ENCODE measurements at regions of chr12 and their contacts with region 1.

Region 1: DNA sequence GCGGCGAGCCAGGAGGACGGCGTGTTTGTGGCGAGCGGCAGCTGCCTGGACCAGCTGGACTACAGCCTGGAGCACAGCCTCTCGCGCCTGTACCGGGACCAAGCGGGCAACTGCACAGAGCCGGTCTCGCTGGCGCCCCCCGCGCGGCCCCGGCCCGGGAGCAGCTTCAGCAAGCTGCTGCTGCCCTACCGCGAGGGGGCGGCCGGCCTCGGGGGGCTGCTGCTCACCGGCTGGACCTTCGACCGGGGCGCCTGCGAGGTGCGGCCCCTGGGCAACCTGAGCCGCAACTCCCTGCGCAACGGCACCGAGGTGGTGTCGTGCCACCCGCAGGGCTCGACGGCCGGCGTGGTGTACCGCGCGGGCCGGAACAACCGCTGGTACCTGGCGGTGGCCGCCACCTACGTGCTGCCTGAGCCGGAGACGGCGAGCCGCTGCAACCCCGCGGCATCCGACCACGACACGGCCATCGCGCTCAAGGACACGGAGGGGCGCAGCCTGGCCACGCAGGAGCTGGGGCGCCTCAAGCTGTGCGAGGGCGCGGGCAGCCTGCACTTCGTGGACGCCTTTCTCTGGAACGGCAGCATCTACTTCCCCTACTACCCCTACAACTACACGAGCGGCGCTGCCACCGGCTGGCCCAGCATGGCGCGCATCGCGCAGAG is 873 bp downstream of the PLXNC1 start:
- DNase-seq: peak; percentile 50
- H3K4me3 ChIP-seq: peak overlapping the region; percentile 56
- H3K27ac ChIP-seq: peak overlapping the region; percentile 3
- H3K4me1 ChIP-seq: peaks cover 13% of the 10 kb centered on the region
- H3K27me3 ChIP-seq: peaks cover 13% of the 10 kb centered on the region
- CTCF ChIP-seq: peak; percentile 40

Region 2: DNA sequence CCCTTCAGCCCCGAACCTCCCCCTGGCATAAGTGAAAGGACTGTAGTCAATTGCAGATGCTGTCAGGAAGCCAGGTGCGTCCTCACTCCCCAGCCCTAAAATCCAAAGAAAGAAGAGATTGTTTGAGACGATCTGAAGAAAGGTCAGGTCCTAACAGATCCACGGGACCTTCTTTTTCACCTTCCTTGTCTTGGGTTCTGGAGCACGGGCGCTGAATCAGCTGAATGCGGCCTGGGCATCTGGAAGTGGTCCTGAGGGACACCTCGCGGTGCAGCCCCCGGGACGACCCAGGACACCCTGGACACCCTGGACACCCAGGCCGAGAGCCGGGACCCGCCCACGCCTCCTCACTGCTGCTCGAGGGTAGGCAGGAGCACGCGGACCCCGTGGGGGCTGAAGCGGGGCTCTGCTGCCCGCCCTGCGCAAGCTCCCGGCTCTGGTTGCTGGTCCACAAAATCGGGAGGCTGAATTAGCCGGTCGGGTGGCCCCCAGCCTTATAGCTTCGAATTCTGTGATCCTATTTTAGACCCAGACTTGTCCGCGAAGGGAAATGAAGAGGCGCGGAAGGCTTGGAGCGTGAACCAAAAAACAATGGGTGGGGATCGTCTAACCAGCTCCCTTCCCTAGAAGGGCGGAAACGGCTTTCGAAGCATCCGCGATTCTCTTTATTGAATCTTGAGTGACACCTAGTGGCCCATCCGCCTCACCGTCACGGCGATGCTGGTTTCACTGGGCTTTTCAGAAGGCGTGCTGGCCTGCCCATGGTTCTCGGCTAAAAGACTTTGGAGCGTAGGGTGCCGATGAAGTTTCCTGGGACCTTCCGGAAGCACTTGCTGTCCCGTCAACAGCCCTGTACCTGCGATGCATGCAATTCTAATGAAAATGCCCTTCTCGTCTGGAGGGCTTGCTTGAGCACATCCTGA is 47.3 kb before region 1 on chr12:
- intact Hi-C with region 1: no loop called
- DNase-seq: peak; percentile 91
- H3K4me3 ChIP-seq: peak overlapping the region; percentile 53
- H3K27ac ChIP-seq: no peak overlapping the region
- H3K4me1 ChIP-seq: no peaks in the 10 kb centered on the region
- H3K27me3 ChIP-seq: no peaks in the 10 kb centered on the region
- CTCF ChIP-seq: peak; percentile 75

Region 3: GRCh38 chr12:94434171-94434570 is 284.9 kb after region 1 on chr12:
- intact Hi-C with region 1: loop called (anchors 5 kb)
- DNase-seq: no peak
- H3K4me3 ChIP-seq: no peak overlapping the region
- H3K27ac ChIP-seq: no peak overlapping the region
- H3K4me1 ChIP-seq: no peaks in the 10 kb centered on the region
- H3K27me3 ChIP-seq: no peaks in the 10 kb centered on the region
- CTCF ChIP-seq: no peak

Measured in colonic mucosa (tissue), 4 donors.